ENCODE measurements at regions of chr3 and their contacts with region 1.

Region 1: GRCh38 chr3:127544192-127544802 is 46.2 kb downstream of the TPRA1 start:
- DNase-seq: peak; percentile 74
- ATAC-seq: peak; percentile 59
- H3K4me3 Mint-ChIP-seq: no peak overlapping the region
- H3K27ac Mint-ChIP-seq: no peak overlapping the region
- H3K4me1 Mint-ChIP-seq: peaks cover 4% of the 10 kb centered on the region
- H3K27me3 Mint-ChIP-seq: peaks cover 30% of the 10 kb centered on the region

Region 2: DNA sequence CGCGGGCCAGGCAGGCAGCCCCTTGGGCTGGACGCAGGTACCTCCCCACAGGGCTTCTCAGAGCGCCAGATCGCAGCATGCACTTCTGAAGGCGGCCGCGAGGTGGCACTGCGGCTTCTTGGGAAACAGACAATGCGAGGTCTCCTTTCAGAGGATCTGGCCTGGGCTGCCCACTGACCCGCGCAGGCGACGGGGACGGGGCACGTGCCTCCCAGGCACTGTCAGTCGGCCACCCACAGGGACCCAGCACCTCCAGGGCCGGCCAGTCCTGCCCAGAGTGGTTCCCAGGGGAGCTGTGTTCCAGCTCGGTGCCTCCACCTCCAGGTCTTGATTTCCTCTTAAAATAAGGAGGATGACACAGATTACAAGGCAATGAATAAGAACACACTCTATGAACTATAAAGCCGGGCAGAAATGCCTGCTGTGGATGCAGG is 865.0 kb before region 1 on chr3:
- CTCF ChIA-PET with region 1: interaction called, 10 read pairs
- DNase-seq: peak; percentile 82
- ATAC-seq: peak; percentile 80
- H3K4me3 Mint-ChIP-seq: no peak overlapping the region
- H3K27ac Mint-ChIP-seq: no peak overlapping the region
- H3K4me1 Mint-ChIP-seq: no peaks in the 10 kb centered on the region
- H3K27me3 Mint-ChIP-seq: peaks cover 31% of the 10 kb centered on the region

Region 3: GRCh38 chr3:127374086-127375010 is 169.9 kb before region 1 on chr3:
- CTCF ChIA-PET with region 1: interaction called, 13 read pairs
- DNase-seq: no peak
- ATAC-seq: no peak
- H3K4me3 Mint-ChIP-seq: no peak overlapping the region
- H3K27ac Mint-ChIP-seq: no peak overlapping the region
- H3K4me1 Mint-ChIP-seq: no peaks in the 10 kb centered on the region
- H3K27me3 Mint-ChIP-seq: peaks cover 6% of the 10 kb centered on the region

Region 4: GRCh38 chr3:127556565-127556964 is 12.3 kb after region 1 on chr3:
- CTCF ChIA-PET with region 1: interaction called, 18 read pairs
- DNase-seq: no peak
- ATAC-seq: no peak
- H3K4me3 Mint-ChIP-seq: no peak overlapping the region
- H3K27ac Mint-ChIP-seq: no peak overlapping the region
- H3K4me1 Mint-ChIP-seq: peaks cover 4% of the 10 kb centered on the region
- H3K27me3 Mint-ChIP-seq: peaks cover 2% of the 10 kb centered on the region

Measured in activated CD8-positive, alpha-beta memory T cell treated with anti-CD3 and anti-CD28 coated beads, Interleukin-2, amount 10 ng/mL, durations not matched to agents 7 days and 5 days (primary cell).